Left lung (tissue), 14 donors: ENCODE measurements at regions of chr3 and their contacts with region 1.

Region 1: DNA sequence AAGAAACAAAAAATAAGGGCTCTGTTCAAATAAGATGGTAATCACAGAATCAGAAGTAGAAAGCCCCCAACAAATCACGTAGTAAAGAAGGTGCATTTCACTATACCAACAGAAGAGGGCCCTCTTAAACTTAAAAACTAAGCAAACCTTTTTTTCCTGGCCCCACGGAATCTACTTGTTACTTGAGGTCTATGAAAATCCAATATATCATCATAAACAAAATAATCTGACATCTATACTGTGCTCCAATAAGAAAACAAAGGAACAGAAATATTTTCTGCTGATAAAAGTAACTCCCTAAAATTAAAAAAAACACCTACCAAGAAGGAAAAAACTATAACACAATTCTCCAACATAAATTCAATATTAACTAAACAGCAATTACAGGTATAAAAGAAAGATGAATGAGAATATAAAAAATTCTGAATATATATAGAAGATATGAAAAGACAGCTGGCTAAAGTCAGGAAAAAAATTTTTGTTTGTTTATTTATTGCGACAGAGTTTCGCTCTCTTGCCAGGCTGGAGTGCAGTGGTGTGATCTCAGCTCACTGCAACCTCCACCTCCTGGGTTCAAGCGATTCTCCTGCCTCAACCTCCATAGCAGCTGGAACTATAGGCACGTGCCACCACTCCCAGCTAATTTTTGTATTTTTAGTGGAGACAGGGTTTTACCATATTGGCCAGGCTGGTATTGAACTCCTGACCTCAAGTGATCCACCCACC is 81.8 kb downstream of the CLASP2 start:
- DNase-seq: peak in 2 of 4 donors; percentile 15 to 53
- ATAC-seq: peak; percentile 82
- H3K4me3 ChIP-seq: no peak overlapping the region
- H3K27ac ChIP-seq: no peak overlapping the region
- H3K4me1 ChIP-seq: peaks cover 0 to 7% of the 10 kb centered on the region in 2 donors
- H3K27me3 ChIP-seq: no peaks in the 10 kb centered on the region
- CTCF ChIP-seq: peak; percentile 43 to 71

Region 2: GRCh38 chr3:33717866-33718594 is 81.7 kb after region 1 on chr3 and contains the start of gene CLASP2:
- intact Hi-C with region 1: loop called in 1 of 2 experiments (anchors 10 kb)
- DNase-seq: peak; percentile 89 to 97 (median 93)
- ATAC-seq: peak; percentile 93
- H3K4me3 ChIP-seq: peak within 1 kb of the TSS; percentile 67 to 69
- H3K27ac ChIP-seq: peak within 1 kb of the TSS; percentile 94 to 98
- H3K4me1 ChIP-seq: peaks cover 10 to 14% of the 10 kb centered on the region in 2 donors
- H3K27me3 ChIP-seq: no peaks in the 10 kb centered on the region
- CTCF ChIP-seq: no peak
- polyA plus RNA-seq, gene CLASP2: 53.0 to 73.3 (median 64.5) TPM

Region 3: DNA sequence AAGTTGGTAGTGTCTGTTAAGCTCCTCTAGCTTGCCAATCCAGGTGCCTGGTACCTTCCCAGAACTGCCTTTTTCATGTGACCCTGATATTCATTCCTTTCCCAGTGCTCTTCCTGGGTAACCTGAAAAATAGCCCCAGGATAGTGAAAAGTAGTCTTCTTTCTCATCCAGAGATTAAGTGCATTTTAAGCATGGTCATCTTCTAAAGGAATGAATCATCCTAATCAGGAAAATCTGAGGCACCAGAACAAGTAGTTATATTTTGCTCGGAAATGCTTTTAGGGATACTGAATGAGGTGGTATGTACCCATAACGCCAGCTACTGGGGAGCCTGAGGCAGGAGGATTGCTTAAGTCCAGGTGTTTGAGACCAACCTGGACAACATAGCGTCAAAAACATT is 139.1 kb after region 1 on chr3:
- intact Hi-C with region 1: loop called in 1 of 2 experiments (anchors 5 kb)
- DNase-seq: no peak
- ATAC-seq: no peak
- H3K4me3 ChIP-seq: no peak overlapping the region
- H3K27ac ChIP-seq: no peak overlapping the region
- H3K4me1 ChIP-seq: no peaks in the 10 kb centered on the region
- H3K27me3 ChIP-seq: no peaks in the 10 kb centered on the region
- CTCF ChIP-seq: no peak